ENCODE measurements at regions of chr17 and their contacts with region 1.

Region 1: DNA sequence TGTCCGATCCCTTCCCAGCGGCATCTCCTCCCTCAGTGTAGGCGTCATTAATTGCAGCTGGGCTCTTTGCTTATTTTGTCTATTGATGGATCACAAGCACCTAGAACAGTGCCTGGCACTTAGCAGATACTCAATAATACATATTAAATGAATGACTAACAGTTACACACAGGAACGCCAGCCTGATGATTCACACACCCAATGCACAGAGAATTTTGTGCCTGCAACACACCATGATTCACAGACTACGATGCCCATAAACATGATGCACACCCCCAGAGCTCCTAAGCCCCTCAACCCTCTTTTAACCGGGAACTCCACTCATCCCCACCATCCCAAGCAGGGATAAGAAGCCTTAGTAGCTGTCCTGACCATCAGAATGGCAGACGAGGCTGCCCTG is 66.6 kb upstream of the TMEM97 start:
- DNase-seq: no peak
- ATAC-seq: no peak
- H3K4me3 ChIP-seq: no peak overlapping the region
- H3K27ac ChIP-seq: 0 out of 6 replicates have a peak overlapping the region, but pooled peaks of 1 of the 2 experiments have one; percentile 16
- H3K4me1 ChIP-seq: peaks cover 15% of the 10 kb centered on the region
- CTCF ChIP-seq: no peak
- EP300 ChIP-seq: no peak
- POLR2A ChIP-seq: no peak
- RAD21 ChIP-seq: no peak

Region 2: DNA sequence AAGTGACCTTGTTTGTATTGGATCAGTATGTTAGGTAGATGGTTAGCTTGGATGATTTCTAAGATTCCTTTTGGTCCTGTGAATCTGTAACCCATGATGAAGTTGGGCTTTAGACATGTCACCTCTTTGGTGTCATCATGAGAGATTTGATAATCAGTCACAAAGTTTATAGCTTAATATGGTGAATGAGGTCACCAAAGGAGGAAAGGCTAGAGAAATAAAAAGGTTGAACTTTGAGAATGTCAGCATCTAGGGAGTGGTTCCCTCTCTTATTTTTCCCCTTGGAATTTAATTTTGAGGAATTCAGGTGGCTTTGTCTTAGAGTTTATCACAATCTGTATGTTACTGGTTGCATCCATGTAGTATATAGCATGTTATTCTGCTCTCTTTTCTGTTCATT is 164.7 kb before region 1 on chr17:
- CTCF ChIA-PET with region 1: no interaction called
- POLR2A ChIA-PET with region 1: no interaction called
- DNase-seq: no peak
- ATAC-seq: no peak
- H3K4me3 ChIP-seq: no peak overlapping the region
- H3K27ac ChIP-seq: no peak overlapping the region
- H3K4me1 ChIP-seq: peaks cover 15% of the 10 kb centered on the region
- CTCF ChIP-seq: no peak
- EP300 ChIP-seq: no peak
- POLR2A ChIP-seq: no peak
- RAD21 ChIP-seq: no peak

Region 3: DNA sequence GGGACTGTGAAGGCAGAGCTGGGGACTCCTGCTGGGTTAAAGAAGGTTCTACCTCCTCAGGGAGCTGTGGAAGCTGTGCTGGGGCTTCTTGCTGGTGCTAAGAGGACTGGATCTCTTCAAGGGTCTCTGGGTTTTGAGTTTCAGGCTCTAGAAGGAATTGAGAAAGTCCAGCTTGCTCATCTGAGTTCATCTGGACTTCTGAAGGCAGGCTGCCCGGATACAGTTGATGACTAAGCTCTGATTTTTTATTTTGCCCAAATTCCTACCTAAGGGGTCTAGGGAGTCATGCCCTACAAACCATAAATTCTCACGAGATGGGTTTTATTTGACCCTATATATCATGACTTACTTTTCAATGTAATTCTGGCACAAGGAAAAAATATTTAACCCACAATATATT is 19.7 kb after region 1 on chr17:
- CTCF ChIA-PET with region 1: interaction called, 93 read pairs
- POLR2A ChIA-PET with region 1: no interaction called
- DNase-seq: no peak
- ATAC-seq: no peak
- H3K4me3 ChIP-seq: no peak overlapping the region
- H3K27ac ChIP-seq: peak overlapping the region in 1 of 2 experiments; percentile 30; a peak in 1 of 6 replicates
- H3K4me1 ChIP-seq: no peaks in the 10 kb centered on the region
- CTCF ChIP-seq: no peak
- EP300 ChIP-seq: no peak
- POLR2A ChIP-seq: no peak
- RAD21 ChIP-seq: no peak

Region 4: DNA sequence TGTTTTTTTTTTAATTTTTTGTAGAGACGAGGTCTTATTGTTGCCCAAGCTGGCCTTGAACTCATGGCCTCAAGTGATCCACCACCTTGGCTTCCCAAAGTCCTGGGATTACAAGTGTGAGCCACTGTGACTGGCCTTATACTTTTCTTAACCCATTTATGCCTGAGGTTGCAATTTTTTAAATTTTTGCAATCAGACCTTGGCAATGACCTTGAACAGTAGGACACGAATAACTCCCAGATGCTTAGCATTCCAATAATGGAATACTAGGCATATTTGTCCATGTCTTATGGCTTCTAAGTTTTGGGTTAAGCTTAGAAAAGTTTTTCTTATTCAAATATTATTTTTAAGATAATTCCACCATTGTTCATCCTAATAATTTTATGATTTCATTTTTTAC is 38.3 kb after region 1 on chr17:
- CTCF ChIA-PET with region 1: interaction called, 11 read pairs
- POLR2A ChIA-PET with region 1: no interaction called
- DNase-seq: no peak
- ATAC-seq: no peak
- H3K4me3 ChIP-seq: no peak overlapping the region
- H3K27ac ChIP-seq: no peak overlapping the region
- H3K4me1 ChIP-seq: no peaks in the 10 kb centered on the region
- CTCF ChIP-seq: no peak
- EP300 ChIP-seq: no peak
- POLR2A ChIP-seq: no peak
- RAD21 ChIP-seq: no peak

Region 5: GRCh38 chr17:28327031-28327607 is 74.7 kb after region 1 on chr17:
- CTCF ChIA-PET with region 1: interaction called, 27 read pairs
- POLR2A ChIA-PET with region 1: interaction called, 3 read pairs
- DNase-seq: no peak
- ATAC-seq: no peak
- H3K4me3 ChIP-seq: no peak overlapping the region
- H3K27ac ChIP-seq: no peak overlapping the region
- H3K4me1 ChIP-seq: peaks cover 35% of the 10 kb centered on the region
- CTCF ChIP-seq: no peak
- EP300 ChIP-seq: no peak
- POLR2A ChIP-seq: no peak
- RAD21 ChIP-seq: no peak

Region 6: GRCh38 chr17:28484296-28484695 is 231.9 kb after region 1 on chr17:
- CTCF ChIA-PET with region 1: no interaction called
- POLR2A ChIA-PET with region 1: no interaction called
- DNase-seq: no peak
- ATAC-seq: no peak
- H3K4me3 ChIP-seq: no peak overlapping the region
- H3K27ac ChIP-seq: no peak overlapping the region
- H3K4me1 ChIP-seq: peaks cover 11% of the 10 kb centered on the region
- CTCF ChIP-seq: no peak
- EP300 ChIP-seq: no peak
- POLR2A ChIP-seq: no peak
- RAD21 ChIP-seq: no peak

Region 7: DNA sequence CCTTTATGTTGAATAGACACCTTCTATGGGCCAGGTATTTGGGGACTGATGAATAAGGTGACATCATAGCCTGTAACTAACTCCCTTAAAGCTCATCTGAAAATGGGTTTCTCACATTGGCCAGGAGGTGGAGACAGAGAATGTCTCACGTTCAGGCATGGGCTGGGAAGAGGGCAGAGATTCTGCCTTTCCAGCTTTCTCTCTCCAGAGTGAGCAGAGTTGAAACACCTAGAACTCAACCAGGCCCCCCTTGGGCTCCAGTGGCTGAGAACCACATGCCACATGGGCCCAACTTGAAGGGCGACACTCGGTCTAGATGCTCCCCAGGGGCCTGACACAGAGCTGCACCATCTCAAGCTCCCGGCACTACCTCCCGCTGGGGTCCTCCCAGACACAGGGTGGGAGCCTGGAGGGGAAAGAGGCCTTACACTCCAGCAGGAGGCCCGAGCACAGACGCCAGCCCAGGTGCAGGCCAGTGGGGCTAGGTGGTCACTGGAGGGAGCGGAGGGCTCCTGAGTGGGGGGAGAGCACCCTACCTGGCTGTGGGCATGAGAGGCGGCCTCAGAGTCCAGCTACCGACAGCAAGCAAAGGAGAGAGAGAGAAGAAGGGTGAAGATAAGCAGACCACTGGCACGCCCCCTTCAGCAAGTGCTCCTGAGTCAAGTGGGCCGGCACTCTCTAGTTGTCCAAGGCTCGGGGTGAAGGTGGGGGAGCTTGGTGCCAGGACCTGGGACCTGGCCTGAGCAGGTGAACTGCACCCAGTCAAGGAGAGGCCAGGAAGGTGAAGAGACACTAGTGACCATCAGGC is 871.9 kb after region 1 on chr17:
- CTCF ChIA-PET with region 1: no interaction called
- POLR2A ChIA-PET with region 1: no interaction called
- DNase-seq: peak; percentile 82 to 83
- ATAC-seq: peak; percentile 83 to 93
- H3K4me3 ChIP-seq: no peak overlapping the region
- H3K27ac ChIP-seq: peak overlapping the region in 1 of 2 experiments; percentile 39; a peak in 3 of 6 replicates
- H3K4me1 ChIP-seq: peaks cover 16% of the 10 kb centered on the region
- CTCF ChIP-seq: peak; percentile 88
- EP300 ChIP-seq: no peak
- POLR2A ChIP-seq: no peak
- RAD21 ChIP-seq: peak; percentile 88 to 96

Measured in A549 (cell line).